BJ (cell line): ENCODE measurements at regions of chr17 and their contacts with region 1.

Region 1: GRCh38 chr17:21126645-21127510 is at the start of gene DHRS7B:
- DNase-seq: peak; percentile 51
- H3K4me3 ChIP-seq: peak within 1 kb of the TSS; percentile 68
- H3K27me3 ChIP-seq: no peaks in the 10 kb centered on the region
- CTCF ChIP-seq: 0 out of 2 replicates have a peak, but pooled peaks have one; percentile 14
- polyA plus RNA-seq, gene DHRS7B: 33.8 and 47.0 TPM in 2 replicates

Region 2: DNA sequence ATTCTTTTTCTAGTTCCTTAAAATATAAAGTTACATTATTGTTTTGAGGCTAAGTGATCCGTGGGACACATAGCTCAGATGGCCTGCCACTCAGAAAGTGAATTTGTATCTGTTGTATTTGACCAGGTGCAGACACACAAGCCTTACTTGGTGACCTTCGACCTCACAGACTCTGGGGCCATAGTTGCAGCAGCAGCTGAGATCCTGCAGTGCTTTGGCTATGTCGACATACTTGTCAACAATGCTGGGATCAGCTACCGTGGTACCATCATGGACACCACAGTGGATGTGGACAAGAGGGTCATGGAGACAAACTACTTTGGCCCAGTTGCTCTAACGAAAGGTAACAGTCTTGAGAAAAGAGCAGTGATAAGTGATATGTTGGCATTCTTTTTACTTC is 56.6 kb after region 1 on chr17:
- CTCF ChIA-PET with region 1: no interaction called
- POLR2A ChIA-PET with region 1: no interaction called
- DNase-seq: no peak
- H3K4me3 ChIP-seq: no peak overlapping the region
- H3K27me3 ChIP-seq: no peaks in the 10 kb centered on the region
- CTCF ChIP-seq: no peak

Region 3: DNA sequence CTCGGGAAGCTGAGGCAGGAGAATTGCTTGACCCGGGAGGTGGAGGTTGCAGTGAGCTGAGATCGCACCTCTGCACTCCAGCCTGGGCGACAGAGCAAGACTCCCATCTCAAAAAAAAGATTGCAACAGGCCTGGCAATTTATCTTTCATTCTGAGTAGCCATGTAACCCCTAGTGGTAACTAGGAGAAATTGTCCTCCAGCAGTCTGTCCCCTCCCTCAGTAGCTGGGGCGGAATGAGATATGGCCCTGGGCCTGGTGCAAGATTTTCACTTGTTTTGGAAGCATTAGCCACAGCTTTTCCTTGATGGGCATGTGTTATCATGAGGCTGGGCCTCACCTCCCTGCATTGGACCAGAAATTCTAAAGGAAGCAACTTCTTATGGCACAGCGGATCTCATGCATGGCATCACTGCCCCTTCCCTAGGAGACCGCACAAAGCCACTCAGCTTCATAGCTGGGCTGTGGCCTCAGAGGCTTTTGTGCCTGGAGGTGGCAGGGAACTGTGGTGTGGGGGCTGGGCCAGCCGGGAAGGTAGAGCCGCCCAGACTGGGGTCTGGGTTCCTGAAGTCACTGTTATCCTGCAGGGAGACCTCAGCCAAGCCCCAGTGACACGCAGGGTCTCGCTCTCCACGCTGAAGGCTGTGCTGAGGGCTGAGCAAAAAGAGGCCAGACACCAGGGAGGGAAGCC is 112.9 kb after region 1 on chr17:
- CTCF ChIA-PET with region 1: interaction called, 19 read pairs
- POLR2A ChIA-PET with region 1: no interaction called
- DNase-seq: no peak
- H3K4me3 ChIP-seq: no peak overlapping the region
- H3K27me3 ChIP-seq: no peaks in the 10 kb centered on the region
- CTCF ChIP-seq: peak; percentile 53

Region 4: GRCh38 chr17:21280081-21280518 is 153.2 kb after region 1 on chr17:
- CTCF ChIA-PET with region 1: interaction called, 25 read pairs
- POLR2A ChIA-PET with region 1: no interaction called
- DNase-seq: no peak
- H3K4me3 ChIP-seq: no peak overlapping the region
- H3K27me3 ChIP-seq: no peaks in the 10 kb centered on the region
- CTCF ChIP-seq: peak; percentile 100